ENCODE measurements at regions of chr5 and their contacts with region 1.

Region 1: GRCh38 chr5:55467862-55468551 is 66.8 kb downstream of the PLPP1 start:
- DNase-seq: no peak
- H3K4me3 ChIP-seq: no peak overlapping the region
- H3K27ac ChIP-seq: no peak overlapping the region
- H3K4me1 ChIP-seq: no peaks in the 10 kb centered on the region
- CTCF ChIP-seq: no peak

Region 2: DNA sequence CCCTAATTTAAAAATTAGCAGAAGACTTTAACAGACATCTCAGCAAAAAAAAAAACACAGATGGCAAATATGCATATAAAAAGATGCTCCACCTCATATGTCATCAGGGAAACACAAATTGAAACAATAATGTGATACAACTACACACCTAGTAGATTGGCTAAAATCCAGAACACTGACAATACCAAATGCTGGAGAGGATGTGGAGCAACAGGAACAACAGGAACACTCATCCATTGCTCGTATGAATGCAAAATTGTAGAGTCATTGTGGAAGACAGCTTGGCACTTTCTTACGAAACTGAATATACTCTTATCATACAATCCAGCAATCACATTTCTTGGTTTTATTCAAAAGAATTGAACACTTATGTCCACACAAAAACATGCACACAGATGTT is 263.0 kb before region 1 on chr5:
- CTCF ChIA-PET with region 1: no interaction called
- POLR2A ChIA-PET with region 1: no interaction called
- intact Hi-C with region 1: no loop called
- DNase-seq: no peak
- H3K4me3 ChIP-seq: no peak overlapping the region
- H3K27ac ChIP-seq: no peak overlapping the region
- H3K4me1 ChIP-seq: no peaks in the 10 kb centered on the region
- CTCF ChIP-seq: no peak

Region 3: GRCh38 chr5:55440188-55440646 is 27.8 kb before region 1 on chr5:
- CTCF ChIA-PET with region 1: no interaction called
- POLR2A ChIA-PET with region 1: no interaction called
- intact Hi-C with region 1: no loop called
- DNase-seq: no peak
- H3K4me3 ChIP-seq: no peak overlapping the region
- H3K27ac ChIP-seq: no peak overlapping the region
- H3K4me1 ChIP-seq: no peaks in the 10 kb centered on the region
- CTCF ChIP-seq: no peak

Region 4: DNA sequence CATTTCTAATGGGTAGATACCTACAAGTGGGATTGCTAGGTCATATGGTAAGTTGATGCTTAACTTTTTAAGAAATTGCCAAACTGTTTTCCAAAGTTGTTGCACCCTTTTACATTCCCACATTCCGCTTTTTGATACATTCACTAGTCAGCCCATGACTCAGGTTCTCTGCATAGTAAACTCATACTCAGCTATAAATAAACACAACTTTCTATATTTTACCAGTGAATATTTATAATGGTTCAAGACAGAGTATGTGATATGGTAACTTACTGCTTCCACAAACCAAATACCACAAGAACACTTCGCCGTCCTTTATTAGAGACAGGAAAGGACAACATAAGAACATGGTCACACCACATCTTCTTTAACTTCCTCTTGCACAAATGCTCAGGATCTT is 12.8 kb after region 1 on chr5:
- CTCF ChIA-PET with region 1: no interaction called
- POLR2A ChIA-PET with region 1: interaction called, 11 read pairs
- intact Hi-C with region 1: no loop called
- DNase-seq: no peak
- H3K4me3 ChIP-seq: no peak overlapping the region
- H3K27ac ChIP-seq: no peak overlapping the region
- H3K4me1 ChIP-seq: no peaks in the 10 kb centered on the region
- CTCF ChIP-seq: no peak